Right lobe of liver (tissue), 6 donors: ENCODE measurements at regions of chr17 and their contacts with region 1.

Region 1: GRCh38 chr17:40290629-40291287 is 3.1 kb downstream of the CDC6 start:
- DNase-seq: no peak
- ATAC-seq: peak in 3 of 4 donors; percentile 24 to 33 (median 29)
- H3K4me3 ChIP-seq: no peak overlapping the region
- H3K27ac ChIP-seq: no peak overlapping the region
- H3K4me1 ChIP-seq: peaks cover 0 to 15% (median 0%) of the 10 kb centered on the region in 4 donors
- H3K27me3 ChIP-seq: no peaks in the 10 kb centered on the region
- CTCF ChIP-seq: peak; percentile 66 to 74 (median 70)
- POLR2A ChIP-seq: no peak

Region 2: DNA sequence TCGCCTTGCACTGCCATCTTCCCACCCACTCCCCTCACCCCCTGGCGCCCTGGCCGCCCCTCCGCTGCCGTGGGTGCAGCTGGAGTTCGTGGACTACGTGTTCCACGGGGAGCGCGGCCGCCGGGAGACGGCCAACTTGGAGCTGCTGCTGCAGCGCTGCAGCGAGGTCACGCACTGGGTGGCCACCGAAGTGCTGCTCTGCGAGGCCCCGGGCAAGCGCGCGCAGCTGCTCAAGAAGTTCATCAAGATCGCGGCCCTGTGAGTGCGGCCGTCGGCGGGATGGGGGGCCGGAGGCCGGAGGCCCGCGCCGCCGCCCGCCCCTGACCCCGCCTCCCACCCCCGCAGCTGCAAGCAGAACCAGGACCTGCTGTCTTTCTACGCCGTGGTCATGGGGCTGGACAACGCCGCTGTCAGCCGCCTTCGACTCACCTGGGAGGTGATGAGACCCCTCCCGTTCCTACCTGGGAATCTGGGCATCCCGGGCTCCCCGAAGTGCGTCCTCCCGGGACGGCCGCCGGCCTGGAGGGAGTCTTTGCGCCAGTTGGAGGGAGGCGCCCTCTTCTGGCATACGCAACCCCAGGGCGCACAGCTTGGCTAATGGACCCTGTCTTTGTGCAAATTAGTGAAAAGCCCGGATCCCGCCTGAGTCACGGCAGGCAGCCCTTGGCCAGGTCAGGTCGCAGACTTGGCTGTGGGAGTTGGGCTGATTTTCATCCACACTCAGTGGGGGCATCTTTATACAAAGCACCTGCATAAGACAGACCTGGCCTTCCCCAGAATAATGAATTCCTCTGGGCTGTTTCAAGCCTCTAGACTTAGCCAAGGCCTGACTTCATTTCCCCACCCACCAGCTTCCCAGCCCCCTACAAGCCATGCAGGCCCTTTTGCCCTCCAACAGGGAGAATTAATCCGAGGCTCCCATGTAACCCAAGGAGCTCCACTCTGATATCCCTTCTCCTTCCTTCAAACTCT is 99.2 kb before region 1 on chr17:
- intact Hi-C with region 1: loop called in 1 of 2 experiments (anchors 5 kb)
- DNase-seq: peak; percentile 80 to 86 (median 83)
- ATAC-seq: peak; percentile 87 to 96 (median 92)
- H3K4me3 ChIP-seq: peak overlapping the region; percentile 42 to 62 (median 53)
- H3K27ac ChIP-seq: peak overlapping the region in 1 of 3 donors; percentile 12
- H3K4me1 ChIP-seq: no peaks in the 10 kb centered on the region
- H3K27me3 ChIP-seq: no peaks in the 10 kb centered on the region
- CTCF ChIP-seq: peak; percentile 53 to 81 (median 79)
- POLR2A ChIP-seq: no peak

Region 3: DNA sequence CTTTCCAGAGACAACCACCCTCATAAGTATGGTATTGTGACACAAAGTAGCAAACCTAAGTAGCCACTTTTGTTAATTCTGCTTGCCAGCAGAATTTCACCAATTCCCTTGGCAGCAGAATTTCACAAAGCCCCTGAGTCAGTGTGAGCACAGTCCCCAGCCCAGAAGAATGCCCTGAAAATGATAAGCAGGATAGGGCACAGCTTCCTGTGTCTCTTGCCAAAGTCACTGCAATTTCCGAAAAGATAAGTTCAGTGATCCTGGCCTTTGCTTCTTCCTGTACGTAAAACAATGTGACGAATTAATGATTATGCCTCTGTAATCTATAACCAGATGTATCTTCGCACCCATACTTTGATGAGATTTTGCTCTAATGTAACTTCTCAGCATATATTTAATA is 87.6 kb before region 1 on chr17:
- intact Hi-C with region 1: loop called (anchors 5 kb)
- DNase-seq: no peak
- ATAC-seq: peak; percentile 67 to 78 (median 72)
- H3K4me3 ChIP-seq: no peak overlapping the region
- H3K27ac ChIP-seq: peak overlapping the region in 2 of 3 donors; percentile 11 to 16
- H3K4me1 ChIP-seq: peaks cover 0 to 17% (median 7%) of the 10 kb centered on the region in 4 donors
- H3K27me3 ChIP-seq: no peaks in the 10 kb centered on the region
- CTCF ChIP-seq: no peak
- POLR2A ChIP-seq: no peak